ENCODE measurements at regions of chr7 and their contacts with region 1.

Region 1: GRCh38 chr7:36406156-36406555 is 16.5 kb downstream of the ANLN start:
- DNase-seq: peak; percentile 20
- H3K4me3 ChIP-seq: no peak overlapping the region
- H3K27ac ChIP-seq: peak overlapping the region; percentile 27
- H3K4me1 ChIP-seq: peaks cover 32% of the 10 kb centered on the region
- H3K27me3 ChIP-seq: no peaks in the 10 kb centered on the region
- CTCF ChIP-seq: no peak

Region 2: DNA sequence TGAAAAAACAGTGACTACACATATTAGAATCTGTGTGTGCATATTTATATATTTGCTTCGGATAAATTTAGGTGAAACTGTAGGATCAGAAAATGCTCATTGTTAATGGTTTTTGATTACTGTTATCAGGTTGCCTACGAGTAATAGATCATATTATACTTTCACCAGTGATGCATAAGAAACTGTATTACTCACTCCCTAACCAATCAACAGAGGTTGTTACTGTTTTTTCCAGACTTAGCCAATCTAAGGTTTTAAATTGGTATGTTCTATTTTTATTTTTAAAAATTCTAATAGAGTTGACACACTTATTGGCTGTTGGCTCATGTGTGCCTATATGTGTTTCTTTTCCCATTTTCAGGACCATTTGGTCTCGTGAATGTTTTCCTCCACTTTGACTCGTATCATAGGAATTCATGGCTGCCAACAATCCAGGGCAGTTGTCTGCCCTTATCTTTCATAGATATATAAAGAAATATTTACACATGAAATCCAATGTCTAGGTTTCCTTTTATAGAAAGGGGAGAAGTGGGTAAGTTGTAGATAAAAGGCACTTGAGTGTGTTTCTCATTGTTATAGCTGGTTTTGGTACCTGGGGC is 42.7 kb after region 1 on chr7:
- CTCF ChIA-PET with region 1: no interaction called
- POLR2A ChIA-PET with region 1: no interaction called
- intact Hi-C with region 1: loop called (anchors 5 kb)
- DNase-seq: no peak
- H3K4me3 ChIP-seq: no peak overlapping the region
- H3K27ac ChIP-seq: no peak overlapping the region
- H3K4me1 ChIP-seq: no peaks in the 10 kb centered on the region
- H3K27me3 ChIP-seq: no peaks in the 10 kb centered on the region
- CTCF ChIP-seq: no peak

Region 3: DNA sequence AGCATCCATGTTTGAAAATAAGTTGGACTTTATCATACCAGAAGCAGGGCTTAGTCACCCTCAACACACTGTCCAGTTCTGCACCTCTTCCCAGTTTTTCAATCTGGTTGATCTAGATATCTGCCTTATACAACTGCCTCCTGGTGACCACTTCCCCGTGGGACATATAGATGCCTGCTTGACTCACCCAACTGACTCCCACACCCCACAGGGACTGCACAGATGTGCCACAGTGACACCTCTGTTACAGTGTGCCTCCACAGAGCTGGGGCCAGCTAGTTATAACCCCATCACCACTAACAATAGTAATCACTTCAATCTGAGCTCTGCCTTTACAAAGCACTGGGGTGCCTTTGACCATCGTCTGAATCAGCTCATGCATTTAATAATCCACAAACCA is 400.7 kb after region 1 on chr7:
- CTCF ChIA-PET with region 1: no interaction called
- POLR2A ChIA-PET with region 1: no interaction called
- intact Hi-C with region 1: no loop called
- DNase-seq: no peak
- H3K4me3 ChIP-seq: no peak overlapping the region
- H3K27ac ChIP-seq: no peak overlapping the region
- H3K4me1 ChIP-seq: no peaks in the 10 kb centered on the region
- H3K27me3 ChIP-seq: peaks cover 10% of the 10 kb centered on the region
- CTCF ChIP-seq: no peak

Measured in A673 (cell line).